Activated CD8-positive, alpha-beta T cell treated with anti-CD3 and anti-CD28 coated beads, Interleukin-2, amount 10 ng/mL, durations not matched to agents 7 days and 5 days (primary cell): ENCODE measurements at regions of chr11 and their contacts with region 1.

Region 1: DNA sequence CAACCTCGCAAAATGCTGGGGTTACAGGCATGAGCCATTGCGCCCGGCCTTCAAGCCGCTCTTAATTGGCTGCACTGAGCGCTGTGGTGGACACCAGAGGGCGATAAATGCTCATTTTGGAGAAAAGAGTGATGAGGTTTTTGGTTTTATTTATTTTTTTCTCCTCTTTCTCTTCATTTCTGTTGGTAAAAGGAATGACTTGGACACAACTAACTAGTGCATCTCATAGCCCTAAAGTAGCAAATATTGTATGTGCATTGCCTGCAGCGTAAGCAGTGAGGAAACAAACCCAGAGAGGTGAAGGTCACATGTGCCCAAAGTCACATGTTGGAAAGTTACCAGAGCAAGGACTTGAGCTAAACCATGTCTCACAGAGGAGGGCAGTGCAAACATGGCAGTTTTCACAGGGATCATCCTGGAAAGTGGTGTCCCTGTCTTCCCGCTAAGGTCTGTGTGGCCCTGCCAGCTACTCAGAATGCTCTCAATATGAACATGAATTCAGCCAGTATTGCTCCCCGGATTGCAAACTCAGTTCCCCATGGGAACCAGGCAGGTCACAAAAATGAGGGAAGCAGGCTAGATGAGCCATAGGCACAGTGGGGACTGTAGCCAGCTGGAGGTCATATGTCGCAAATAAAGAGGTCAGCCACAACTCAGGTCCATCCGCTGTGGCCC is 8.6 kb upstream of the CD82 start:
- DNase-seq: peak; percentile 77
- ATAC-seq: peak; percentile 72
- H3K4me3 Mint-ChIP-seq: no peak overlapping the region
- H3K27ac Mint-ChIP-seq: peak overlapping the region; percentile 62
- H3K4me1 Mint-ChIP-seq: peaks cover 40% of the 10 kb centered on the region
- H3K27me3 Mint-ChIP-seq: peaks cover 6% of the 10 kb centered on the region

Region 2: DNA sequence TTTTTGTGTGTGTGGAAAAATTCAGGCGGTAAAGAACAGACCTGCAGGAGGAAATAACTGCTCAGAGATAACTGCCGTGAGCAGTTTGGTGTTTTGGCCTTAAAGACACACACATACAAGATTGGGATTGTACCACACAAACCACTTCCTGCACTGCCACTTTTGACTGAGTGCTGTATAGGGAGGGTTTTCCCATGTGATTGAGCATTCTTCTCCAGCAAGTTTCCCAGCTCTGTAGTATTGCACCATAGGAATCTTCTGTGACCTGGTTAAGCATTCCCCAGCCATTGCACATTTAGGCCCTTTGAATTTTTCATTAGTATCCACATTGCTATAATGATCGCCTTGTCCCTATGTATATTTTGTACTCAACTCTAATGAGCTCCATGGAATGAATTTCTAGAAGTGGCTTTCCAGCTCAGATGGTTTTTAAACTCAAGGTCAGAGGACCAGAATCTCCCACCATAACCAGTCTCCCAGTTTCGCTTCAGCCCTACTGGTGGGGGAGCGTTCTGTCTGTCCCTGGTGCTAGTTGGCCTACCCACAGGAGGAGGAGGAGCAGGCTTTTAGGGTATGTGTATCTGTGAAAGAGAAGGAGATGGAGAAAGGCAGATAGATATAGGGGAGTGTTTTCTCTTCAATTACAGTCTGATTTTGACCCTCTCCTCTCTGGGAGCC is 17.9 kb after region 1 on chr11:
- CTCF ChIA-PET with region 1: interaction called, 13 read pairs
- POLR2A ChIA-PET with region 1: interaction called, 6 read pairs
- DNase-seq: peak; percentile 79
- ATAC-seq: peak; percentile 75
- H3K4me3 Mint-ChIP-seq: peak overlapping the region; percentile 64
- H3K27ac Mint-ChIP-seq: peak overlapping the region; percentile 94
- H3K4me1 Mint-ChIP-seq: peaks cover 95% of the 10 kb centered on the region
- H3K27me3 Mint-ChIP-seq: no peaks in the 10 kb centered on the region

Region 3: GRCh38 chr11:44596525-44597276 is 39.8 kb after region 1 on chr11:
- CTCF ChIA-PET with region 1: interaction called, 10 read pairs
- POLR2A ChIA-PET with region 1: no interaction called
- DNase-seq: peak; percentile 77
- ATAC-seq: peak; percentile 86
- H3K4me3 Mint-ChIP-seq: peak overlapping the region; percentile 50
- H3K27ac Mint-ChIP-seq: peak overlapping the region; percentile 90
- H3K4me1 Mint-ChIP-seq: peaks cover 65% of the 10 kb centered on the region
- H3K27me3 Mint-ChIP-seq: no peaks in the 10 kb centered on the region

Region 4: GRCh38 chr11:44611687-44612434 is 55.0 kb after region 1 on chr11:
- CTCF ChIA-PET with region 1: interaction called, 334 read pairs
- POLR2A ChIA-PET with region 1: interaction called, 10 read pairs
- DNase-seq: peak; percentile 84
- ATAC-seq: peak; percentile 76
- H3K4me3 Mint-ChIP-seq: no peak overlapping the region
- H3K27ac Mint-ChIP-seq: peak overlapping the region; percentile 77
- H3K4me1 Mint-ChIP-seq: peaks cover 79% of the 10 kb centered on the region
- H3K27me3 Mint-ChIP-seq: no peaks in the 10 kb centered on the region

Region 5: DNA sequence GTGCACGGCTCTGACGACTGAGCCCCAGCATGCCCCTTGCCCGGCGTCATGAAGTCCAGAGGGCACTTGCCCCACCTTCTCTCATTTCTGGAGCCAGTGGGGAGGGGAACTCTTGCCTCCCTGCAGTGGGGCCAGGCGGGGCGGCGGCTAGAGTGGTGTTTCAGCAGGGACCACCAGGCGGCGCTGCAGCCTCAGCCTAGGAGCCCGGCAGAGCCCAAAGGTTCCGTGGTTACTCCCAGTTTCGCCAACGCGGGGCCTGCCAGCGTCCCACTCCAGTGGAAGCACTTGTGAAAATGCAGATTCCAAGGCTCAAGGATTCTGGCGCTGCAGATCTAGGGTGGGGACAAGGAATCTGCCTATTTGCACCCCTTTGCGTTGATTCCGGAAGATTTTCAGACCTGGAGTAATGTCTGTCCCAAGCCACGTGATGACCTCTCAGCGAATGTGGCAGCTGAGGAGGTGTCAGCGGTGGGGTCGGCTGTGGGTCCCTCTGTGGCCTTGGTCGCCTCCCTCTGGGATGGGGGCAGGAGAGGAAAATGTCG is 64.3 kb after region 1 on chr11:
- CTCF ChIA-PET with region 1: interaction called, 334 read pairs
- POLR2A ChIA-PET with region 1: no interaction called
- DNase-seq: peak; percentile 65
- ATAC-seq: peak; percentile 65
- H3K4me3 Mint-ChIP-seq: no peak overlapping the region
- H3K27ac Mint-ChIP-seq: no peak overlapping the region
- H3K4me1 Mint-ChIP-seq: peaks cover 13% of the 10 kb centered on the region
- H3K27me3 Mint-ChIP-seq: no peaks in the 10 kb centered on the region

Region 6: GRCh38 chr11:44634401-44635281 is 77.8 kb after region 1 on chr11:
- CTCF ChIA-PET with region 1: interaction called, 28 read pairs
- POLR2A ChIA-PET with region 1: no interaction called
- DNase-seq: peak; percentile 20
- ATAC-seq: no peak
- H3K4me3 Mint-ChIP-seq: no peak overlapping the region
- H3K27ac Mint-ChIP-seq: no peak overlapping the region
- H3K4me1 Mint-ChIP-seq: peaks cover 5% of the 10 kb centered on the region
- H3K27me3 Mint-ChIP-seq: peaks cover 15% of the 10 kb centered on the region

Region 7: GRCh38 chr11:44775366-44775984 is 218.6 kb after region 1 on chr11:
- CTCF ChIA-PET with region 1: interaction called, 28 read pairs
- POLR2A ChIA-PET with region 1: no interaction called
- DNase-seq: peak; percentile 73
- ATAC-seq: peak; percentile 75
- H3K4me3 Mint-ChIP-seq: no peak overlapping the region
- H3K27ac Mint-ChIP-seq: no peak overlapping the region
- H3K4me1 Mint-ChIP-seq: no peaks in the 10 kb centered on the region
- H3K27me3 Mint-ChIP-seq: peaks cover 5% of the 10 kb centered on the region